ENCODE measurements at regions of chr2 and their contacts with region 1.

Region 1: GRCh38 chr2:38734299-38735058 is 16.7 kb downstream of the SRSF7 start:
- DNase-seq: no peak
- H3K4me3 ChIP-seq: no peak overlapping the region
- H3K27ac ChIP-seq: no peak overlapping the region
- H3K4me1 ChIP-seq: no peaks in the 10 kb centered on the region
- H3K27me3 ChIP-seq: no peaks in the 10 kb centered on the region
- CTCF ChIP-seq: no peak
- EP300 ChIP-seq: no peak
- POLR2A ChIP-seq: no peak

Region 2: GRCh38 chr2:38201784-38202183 is 532.7 kb before region 1 on chr2:
- intact Hi-C with region 1: no loop called
- DNase-seq: no peak
- H3K4me3 ChIP-seq: no peak overlapping the region
- H3K27ac ChIP-seq: no peak overlapping the region
- H3K4me1 ChIP-seq: peaks cover 19% of the 10 kb centered on the region
- H3K27me3 ChIP-seq: no peaks in the 10 kb centered on the region
- CTCF ChIP-seq: no peak
- EP300 ChIP-seq: no peak
- POLR2A ChIP-seq: no peak

Region 3: DNA sequence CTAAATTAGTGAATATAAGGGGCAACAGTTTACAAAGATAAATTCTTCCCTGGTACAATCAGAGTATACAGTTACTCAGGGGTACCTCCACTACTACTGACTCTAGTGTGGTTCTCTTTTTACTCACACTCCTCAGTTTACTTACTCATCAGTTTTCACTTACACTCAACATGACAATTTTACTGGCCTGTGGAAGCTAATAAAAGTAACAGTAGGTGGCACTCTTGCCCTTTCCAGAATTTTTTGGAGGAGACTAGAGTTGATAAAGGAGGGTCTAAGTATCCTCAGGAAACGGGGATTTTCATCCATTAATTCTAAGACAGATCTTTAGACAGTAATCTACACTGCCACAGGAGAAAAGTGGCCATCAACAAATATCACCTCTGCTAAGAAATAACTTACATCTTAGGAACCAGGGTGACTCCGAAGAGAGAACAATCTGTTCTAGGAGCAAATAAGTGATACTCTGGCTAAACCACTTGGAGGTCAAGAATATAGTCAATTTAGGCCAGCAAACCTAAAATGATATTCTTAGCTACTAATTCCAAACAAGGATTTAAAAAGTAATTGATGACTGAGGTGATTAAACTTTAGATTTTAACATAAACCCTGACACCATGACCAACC is 418.7 kb before region 1 on chr2:
- intact Hi-C with region 1: loop called (anchors 5 to 10 kb)
- DNase-seq: no peak
- H3K4me3 ChIP-seq: no peak overlapping the region
- H3K27ac ChIP-seq: no peak overlapping the region
- H3K4me1 ChIP-seq: no peaks in the 10 kb centered on the region
- H3K27me3 ChIP-seq: no peaks in the 10 kb centered on the region
- CTCF ChIP-seq: peak; percentile 58 to 66 (median 60)
- EP300 ChIP-seq: no peak
- POLR2A ChIP-seq: no peak

Region 4: GRCh38 chr2:38323623-38324022 is 410.9 kb before region 1 on chr2:
- intact Hi-C with region 1: loop called (anchors 5 to 10 kb)
- DNase-seq: no peak
- H3K4me3 ChIP-seq: no peak overlapping the region
- H3K27ac ChIP-seq: no peak overlapping the region
- H3K4me1 ChIP-seq: no peaks in the 10 kb centered on the region
- H3K27me3 ChIP-seq: no peaks in the 10 kb centered on the region
- CTCF ChIP-seq: no peak
- EP300 ChIP-seq: no peak
- POLR2A ChIP-seq: no peak

Region 5: GRCh38 chr2:38535744-38536506 is 198.6 kb before region 1 on chr2:
- intact Hi-C with region 1: loop called in 3 of 4 experiments (anchors 5 to 10 kb)
- DNase-seq: peak; percentile 82 to 93 (median 91)
- H3K4me3 ChIP-seq: peak overlapping the region; percentile 46
- H3K27ac ChIP-seq: no peak overlapping the region
- H3K4me1 ChIP-seq: no peaks in the 10 kb centered on the region
- H3K27me3 ChIP-seq: no peaks in the 10 kb centered on the region
- CTCF ChIP-seq: peak; percentile 91 to 98 (median 92)
- EP300 ChIP-seq: no peak
- POLR2A ChIP-seq: no peak

Region 6: GRCh38 chr2:38581193-38582147 is 153.0 kb before region 1 on chr2:
- intact Hi-C with region 1: loop called in 2 of 4 experiments (anchors 5 to 10 kb)
- DNase-seq: peak; percentile 57 to 76 (median 69)
- H3K4me3 ChIP-seq: no peak overlapping the region
- H3K27ac ChIP-seq: no peak overlapping the region
- H3K4me1 ChIP-seq: peaks cover 3% of the 10 kb centered on the region
- H3K27me3 ChIP-seq: no peaks in the 10 kb centered on the region
- CTCF ChIP-seq: peak; percentile 59 to 67 (median 62)
- EP300 ChIP-seq: no peak
- POLR2A ChIP-seq: no peak